Activated CD8-positive, alpha-beta T cell treated with anti-CD3 and anti-CD28 coated beads for 36 hours (primary cell): ENCODE measurements at regions of chr18 and their contacts with region 1.

Region 1: DNA sequence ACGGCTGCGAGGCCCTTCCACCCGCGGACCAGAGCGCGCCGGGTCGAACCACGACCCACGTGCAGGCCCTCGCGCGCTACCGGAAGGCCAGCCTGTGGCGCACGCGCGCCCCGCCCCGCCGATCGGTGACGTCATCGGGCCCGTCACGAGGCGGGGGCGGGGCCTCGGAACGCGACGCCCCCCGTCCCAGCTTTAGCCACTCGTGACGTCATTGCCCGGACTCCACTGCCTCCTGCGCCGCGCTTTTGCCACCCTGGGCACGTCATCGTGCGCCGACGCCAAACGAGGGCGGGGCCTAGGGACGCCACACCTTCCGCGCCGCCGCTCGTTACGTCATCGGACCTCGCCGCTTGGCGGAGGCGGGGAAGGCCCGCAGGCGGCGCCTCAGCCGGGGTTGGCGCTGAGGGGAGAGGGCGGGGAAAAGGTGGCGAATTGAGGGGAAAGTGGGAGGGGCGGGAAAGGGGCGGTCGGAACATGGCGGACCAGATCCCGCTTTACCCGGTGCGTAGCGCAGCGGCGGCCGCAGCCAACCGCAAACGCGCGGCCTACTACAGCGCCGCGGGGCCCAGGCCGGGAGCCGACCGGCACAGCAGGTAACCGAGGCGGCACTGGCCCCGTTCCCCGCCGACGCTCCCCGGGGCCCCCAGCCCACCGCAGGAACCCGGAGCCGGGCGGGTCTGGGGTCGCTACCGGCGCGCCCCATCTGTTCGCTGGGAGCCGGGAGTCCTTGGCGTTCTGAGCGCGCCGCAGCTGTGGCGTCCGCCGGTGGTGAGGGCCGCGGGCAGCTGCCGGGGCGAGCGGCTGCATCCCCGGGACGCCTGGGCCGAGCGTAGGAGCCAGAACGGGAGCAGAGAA is at the start of gene ATP9B:
- DNase-seq: peak; percentile 98
- ATAC-seq: peak; percentile 86
- H3K4me3 Mint-ChIP-seq: peak within 1 kb of the TSS; percentile 82
- H3K27ac Mint-ChIP-seq: peak within 1 kb of the TSS; percentile 98
- H3K4me1 Mint-ChIP-seq: peaks cover 27% of the 10 kb centered on the region
- H3K27me3 Mint-ChIP-seq: no peaks in the 10 kb centered on the region
- CTCF ChIP-seq: no peak
- total RNA-seq, gene ATP9B: 18.9 to 21.1 TPM

Region 2: GRCh38 chr18:78875268-78875997 is 193.7 kb before region 1 on chr18:
- CTCF ChIA-PET with region 1: no interaction called
- POLR2A ChIA-PET with region 1: no interaction called
- intact Hi-C with region 1: no loop called
- DNase-seq: peak; percentile 56
- ATAC-seq: no peak
- H3K4me3 Mint-ChIP-seq: no peak overlapping the region
- H3K27ac Mint-ChIP-seq: no peak overlapping the region
- H3K4me1 Mint-ChIP-seq: no peaks in the 10 kb centered on the region
- H3K27me3 Mint-ChIP-seq: peaks cover 14% of the 10 kb centered on the region
- CTCF ChIP-seq: peak; percentile 57

Region 3: DNA sequence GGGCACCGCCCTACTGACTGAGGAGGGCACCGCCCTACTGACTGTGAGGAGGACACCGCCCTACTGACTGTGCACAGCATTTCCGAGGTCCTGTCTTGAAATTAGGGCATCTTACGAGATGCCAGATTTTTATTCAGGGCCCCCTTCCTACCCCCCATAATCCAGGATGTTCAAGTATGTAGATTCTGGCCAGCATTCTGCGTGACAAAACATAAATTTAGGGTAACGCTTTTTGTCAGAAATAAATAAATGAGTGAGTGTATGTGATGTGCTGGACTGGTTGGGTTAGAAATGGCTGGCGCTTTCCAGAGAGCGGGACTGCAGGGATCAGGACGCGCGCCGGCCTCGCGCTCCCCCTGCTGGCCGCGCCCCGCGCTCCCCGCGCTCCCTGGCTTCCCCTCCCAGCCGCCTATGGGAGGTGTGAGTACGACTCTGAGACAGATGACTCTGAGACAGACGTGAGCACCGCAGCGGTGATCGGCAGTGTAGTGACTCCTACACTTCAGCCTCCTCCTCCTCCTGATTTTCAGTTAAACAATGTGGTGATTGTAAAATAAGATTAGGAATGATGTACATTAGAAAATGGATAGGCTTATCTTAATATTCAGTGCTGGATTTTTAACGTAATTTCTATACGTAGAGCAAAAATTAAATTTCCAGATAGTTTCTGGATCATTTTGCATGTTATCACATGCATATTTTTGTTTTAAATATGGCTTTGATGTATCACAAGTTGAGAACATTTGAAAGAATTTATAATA is 177.4 kb after region 1 on chr18:
- CTCF ChIA-PET with region 1: no interaction called
- POLR2A ChIA-PET with region 1: no interaction called
- intact Hi-C with region 1: loop called (anchors 10 kb)
- DNase-seq: peak; percentile 82
- ATAC-seq: peak; percentile 99
- H3K4me3 Mint-ChIP-seq: peak overlapping the region; percentile 52
- H3K27ac Mint-ChIP-seq: peak overlapping the region; percentile 71
- H3K4me1 Mint-ChIP-seq: peaks cover 12% of the 10 kb centered on the region
- H3K27me3 Mint-ChIP-seq: no peaks in the 10 kb centered on the region
- CTCF ChIP-seq: peak; percentile 96